A549 (cell line): ENCODE measurements at regions of chr5 and their contacts with region 1.

Region 1: GRCh38 chr5:157743163-157744050 is at the start of gene LSM11:
- DNase-seq: peak; percentile 80 to 82
- ATAC-seq: peak; percentile 86 to 94
- H3K4me3 ChIP-seq: peak within 1 kb of the TSS; percentile 100
- H3K27ac ChIP-seq: peak within 1 kb of the TSS; percentile 84 to 95
- H3K4me1 ChIP-seq: peaks cover 13% of the 10 kb centered on the region; the same call in 2 of the 3 replicates
- CTCF ChIP-seq: peak; percentile 99
- EP300 ChIP-seq: no peak
- POLR2A ChIP-seq: no peak
- RAD21 ChIP-seq: peak; percentile 68 to 91
- polyA plus RNA-seq, gene LSM11: 3.7 and 4.1 TPM in 2 replicates

Region 2: GRCh38 chr5:157335534-157336422 is 407.6 kb before region 1 on chr5:
- CTCF ChIA-PET with region 1: interaction called, 15 read pairs
- POLR2A ChIA-PET with region 1: no interaction called
- DNase-seq: no peak
- ATAC-seq: no peak
- H3K4me3 ChIP-seq: no peak overlapping the region
- H3K27ac ChIP-seq: no peak overlapping the region
- H3K4me1 ChIP-seq: no peaks in the 10 kb centered on the region
- CTCF ChIP-seq: no peak
- EP300 ChIP-seq: no peak
- POLR2A ChIP-seq: no peak
- RAD21 ChIP-seq: no peak

Region 3: DNA sequence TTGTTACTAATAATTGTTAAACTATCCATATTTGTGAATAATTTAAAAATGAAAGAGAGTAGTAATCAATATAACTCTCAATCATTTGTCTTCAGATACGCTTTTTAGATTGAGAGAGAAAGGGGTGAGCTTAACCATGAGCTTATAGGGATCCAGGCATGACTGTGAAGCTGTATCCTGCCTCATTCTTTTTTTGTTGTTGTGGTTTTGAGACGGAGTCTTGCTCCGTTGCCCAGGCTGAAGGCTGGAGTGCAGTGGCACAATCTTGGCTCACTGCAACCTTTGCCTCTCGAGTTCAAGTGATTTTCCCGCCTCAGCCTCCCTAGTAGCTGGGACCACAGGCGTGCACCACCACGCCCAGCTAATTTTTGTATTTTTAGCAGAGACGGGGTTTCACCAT is 239.4 kb before region 1 on chr5:
- CTCF ChIA-PET with region 1: interaction called, 11 read pairs
- POLR2A ChIA-PET with region 1: no interaction called
- DNase-seq: no peak
- ATAC-seq: no peak
- H3K4me3 ChIP-seq: no peak overlapping the region
- H3K27ac ChIP-seq: no peak overlapping the region
- H3K4me1 ChIP-seq: no peaks in the 10 kb centered on the region
- CTCF ChIP-seq: no peak
- EP300 ChIP-seq: no peak
- POLR2A ChIP-seq: no peak
- RAD21 ChIP-seq: no peak

Region 4: GRCh38 chr5:157630341-157630740 is 113.1 kb before region 1 on chr5:
- CTCF ChIA-PET with region 1: no interaction called
- POLR2A ChIA-PET with region 1: no interaction called
- DNase-seq: no peak
- ATAC-seq: no peak
- H3K4me3 ChIP-seq: no peak overlapping the region
- H3K27ac ChIP-seq: no peak overlapping the region
- H3K4me1 ChIP-seq: no peaks in the 10 kb centered on the region
- CTCF ChIP-seq: no peak
- EP300 ChIP-seq: no peak
- POLR2A ChIP-seq: no peak
- RAD21 ChIP-seq: no peak

Region 5: GRCh38 chr5:157718519-157718918 is 24.9 kb before region 1 on chr5:
- CTCF ChIA-PET with region 1: interaction called, 17 read pairs
- POLR2A ChIA-PET with region 1: no interaction called
- DNase-seq: peak; percentile 55 to 56
- ATAC-seq: peak; percentile 85 to 95; a peak in 5 of 6 replicates
- H3K4me3 ChIP-seq: no peak overlapping the region
- H3K27ac ChIP-seq: peak overlapping the region in 1 of 2 experiments; percentile 19; a peak in 1 of 6 replicates
- H3K4me1 ChIP-seq: no peaks in the 10 kb centered on the region
- CTCF ChIP-seq: peak; percentile 71
- EP300 ChIP-seq: no peak
- POLR2A ChIP-seq: no peak
- RAD21 ChIP-seq: peak; percentile 84 to 86

Region 6: DNA sequence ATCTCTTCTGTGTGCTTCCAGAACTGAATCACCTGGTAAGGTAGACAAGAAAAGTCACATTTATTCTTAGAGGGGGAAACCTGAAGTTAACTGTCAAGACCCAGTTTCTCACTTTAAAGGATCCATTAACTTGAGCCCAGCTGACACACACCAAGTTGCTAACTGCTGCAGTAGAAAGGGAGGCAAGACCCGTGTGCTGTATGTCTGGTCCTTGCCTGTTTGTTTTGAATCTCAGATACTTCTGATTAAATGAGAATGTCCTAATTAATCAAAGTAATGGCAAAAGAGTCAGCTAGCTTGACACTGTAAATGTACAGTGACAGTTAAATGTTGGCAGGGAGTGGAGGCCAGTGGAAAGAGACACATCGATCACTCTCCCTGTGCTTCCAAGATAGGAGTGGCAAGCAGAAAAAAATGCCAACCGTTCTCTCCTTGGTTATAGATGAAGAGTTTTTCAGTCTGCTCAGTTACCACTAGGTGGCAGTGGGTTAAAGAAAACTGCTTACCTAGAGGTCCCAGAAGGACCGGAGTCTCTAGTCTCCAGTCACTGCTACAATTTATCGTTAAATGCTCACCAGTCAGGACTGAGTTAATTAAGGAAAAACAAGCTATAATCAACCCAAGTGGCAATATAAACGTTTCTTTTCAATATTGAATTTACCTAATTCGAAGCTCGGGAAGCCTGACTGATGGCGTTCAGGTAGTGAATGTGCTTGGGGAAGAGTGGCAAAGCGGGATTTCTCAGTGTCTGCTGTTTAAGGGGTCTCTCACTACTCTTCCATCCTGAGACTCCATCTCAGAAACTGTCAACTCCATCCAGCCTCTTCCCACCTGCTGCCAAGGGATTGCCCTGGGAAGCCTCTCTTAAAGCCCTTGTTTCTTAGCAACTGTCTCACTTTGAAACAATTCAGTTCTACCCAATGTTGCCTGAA is 18.5 kb after region 1 on chr5:
- CTCF ChIA-PET with region 1: interaction called, 78 read pairs
- POLR2A ChIA-PET with region 1: no interaction called
- DNase-seq: peak; percentile 67 to 72
- ATAC-seq: peak; percentile 94 to 98
- H3K4me3 ChIP-seq: no peak overlapping the region
- H3K27ac ChIP-seq: no peak overlapping the region
- H3K4me1 ChIP-seq: no peaks in the 10 kb centered on the region
- CTCF ChIP-seq: peak; percentile 88
- EP300 ChIP-seq: no peak
- POLR2A ChIP-seq: no peak
- RAD21 ChIP-seq: peak; percentile 77 to 82